Activated CD4-positive, alpha-beta T cell treated with anti-CD3 and anti-CD28 coated beads, Interleukin-2, amount 10 ng/mL, durations not matched to agents 24 days and 14 days (primary cell): ENCODE measurements at regions of chr3 and their contacts with region 1.

Region 1: DNA sequence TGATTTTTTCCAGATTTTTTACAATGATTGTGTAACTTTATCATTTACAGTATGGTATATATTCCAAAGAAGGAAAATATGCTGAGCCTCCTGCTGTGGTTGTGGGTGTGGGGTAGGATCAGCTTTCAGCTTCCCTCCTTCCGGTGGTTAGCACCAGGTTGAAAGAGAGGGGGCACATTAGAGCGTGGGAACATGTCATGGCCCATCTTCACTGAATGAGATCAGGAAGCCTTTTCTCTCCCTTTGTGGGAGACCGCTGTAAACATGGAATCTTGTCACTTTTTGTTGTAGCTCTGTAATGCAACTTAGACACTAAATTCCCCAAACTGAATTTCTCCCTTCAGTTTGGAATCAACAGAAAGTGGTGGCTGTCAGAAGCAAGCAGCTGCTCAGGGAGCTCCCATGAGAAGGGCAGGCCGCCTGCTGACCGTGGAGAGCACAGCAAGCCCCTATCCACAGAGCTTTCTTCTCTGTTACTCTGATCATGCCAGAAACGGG is 86.7 kb upstream of the LIMD1 start:
- DNase-seq: no peak
- H3K4me3 Mint-ChIP-seq: no peak overlapping the region
- H3K27ac Mint-ChIP-seq: no peak overlapping the region
- H3K4me1 Mint-ChIP-seq: peaks cover 7% of the 10 kb centered on the region
- H3K27me3 Mint-ChIP-seq: no peaks in the 10 kb centered on the region

Region 2: DNA sequence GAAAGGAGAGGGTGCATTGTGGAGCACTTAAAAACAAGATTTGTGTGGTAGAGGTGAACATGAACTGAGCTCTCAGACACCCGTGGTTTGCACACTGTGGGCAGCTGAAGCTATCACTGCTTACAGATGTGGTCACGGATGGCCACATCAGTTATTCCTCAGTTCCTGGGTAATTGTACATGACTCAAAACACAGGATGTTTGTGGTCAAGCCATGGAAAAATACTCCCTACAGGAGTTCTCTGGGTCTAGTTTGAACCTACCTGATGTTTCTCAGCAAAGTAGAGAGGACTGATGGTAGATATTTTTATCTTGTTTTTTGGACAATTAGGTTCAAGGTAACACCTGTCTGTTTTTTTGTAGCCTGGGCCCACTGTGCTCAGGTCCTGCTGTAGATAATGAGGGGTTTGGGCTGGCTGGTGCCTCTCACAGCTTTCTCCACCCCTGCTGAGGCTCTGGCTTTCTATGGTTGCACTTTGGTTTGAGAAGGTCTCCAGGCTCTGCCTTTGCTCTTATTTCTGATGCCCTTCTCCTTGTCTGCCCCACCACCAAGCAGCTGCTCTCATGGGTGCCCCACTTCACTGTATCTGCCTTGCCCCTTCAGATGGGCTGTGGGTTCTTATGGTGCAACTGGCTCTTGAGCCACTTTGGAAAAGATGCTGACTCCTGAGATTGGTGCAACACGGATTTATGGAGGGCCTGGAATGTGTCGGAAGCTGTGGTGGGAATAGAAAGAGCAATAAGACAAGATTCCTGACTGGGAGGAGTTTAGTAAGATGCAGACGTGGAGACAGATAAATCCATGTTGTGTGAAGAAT is 401.8 kb before region 1 on chr3:
- intact Hi-C with region 1: loop called (anchors 5 kb)
- DNase-seq: peak; percentile 95
- H3K4me3 Mint-ChIP-seq: peak overlapping the region; percentile 62
- H3K27ac Mint-ChIP-seq: peak overlapping the region; percentile 89
- H3K4me1 Mint-ChIP-seq: peaks cover 70% of the 10 kb centered on the region
- H3K27me3 Mint-ChIP-seq: peaks cover 10% of the 10 kb centered on the region

Region 3: GRCh38 chr3:45528429-45528828 is 20.6 kb after region 1 on chr3:
- intact Hi-C with region 1: loop called (anchors 2 kb)
- DNase-seq: no peak
- H3K4me3 Mint-ChIP-seq: no peak overlapping the region
- H3K27ac Mint-ChIP-seq: peak overlapping the region; percentile 61
- H3K4me1 Mint-ChIP-seq: peaks cover 14% of the 10 kb centered on the region
- H3K27me3 Mint-ChIP-seq: no peaks in the 10 kb centered on the region

Region 4: GRCh38 chr3:45656575-45657363 is 148.9 kb after region 1 on chr3:
- intact Hi-C with region 1: loop called (anchors 1 kb)
- DNase-seq: peak; percentile 94
- H3K4me3 Mint-ChIP-seq: no peak overlapping the region
- H3K27ac Mint-ChIP-seq: no peak overlapping the region
- H3K4me1 Mint-ChIP-seq: peaks cover 13% of the 10 kb centered on the region
- H3K27me3 Mint-ChIP-seq: no peaks in the 10 kb centered on the region

Region 5: GRCh38 chr3:45688882-45689756 is 181.2 kb after region 1 on chr3 and contains the start of gene SACM1L:
- intact Hi-C with region 1: loop called (anchors 1 kb)
- DNase-seq: peak; percentile 99
- H3K4me3 Mint-ChIP-seq: peak within 1 kb of the TSS; percentile 87
- H3K27ac Mint-ChIP-seq: peak within 1 kb of the TSS; percentile 94
- H3K4me1 Mint-ChIP-seq: peaks cover 46% of the 10 kb centered on the region
- H3K27me3 Mint-ChIP-seq: peaks cover 4% of the 10 kb centered on the region
- total RNA-seq, gene SACM1L: 88.0 and 91.7 TPM in 2 replicates